Dendritic cell treated with granulocyte-macrophage colony-stimulating factor and Interleukin-4, amounts not matched to agents 40 ng/mL and 50 ng/mL, for 4 days (primary cell): ENCODE measurements at regions of chr12 and their contacts with region 1.

Region 1: DNA sequence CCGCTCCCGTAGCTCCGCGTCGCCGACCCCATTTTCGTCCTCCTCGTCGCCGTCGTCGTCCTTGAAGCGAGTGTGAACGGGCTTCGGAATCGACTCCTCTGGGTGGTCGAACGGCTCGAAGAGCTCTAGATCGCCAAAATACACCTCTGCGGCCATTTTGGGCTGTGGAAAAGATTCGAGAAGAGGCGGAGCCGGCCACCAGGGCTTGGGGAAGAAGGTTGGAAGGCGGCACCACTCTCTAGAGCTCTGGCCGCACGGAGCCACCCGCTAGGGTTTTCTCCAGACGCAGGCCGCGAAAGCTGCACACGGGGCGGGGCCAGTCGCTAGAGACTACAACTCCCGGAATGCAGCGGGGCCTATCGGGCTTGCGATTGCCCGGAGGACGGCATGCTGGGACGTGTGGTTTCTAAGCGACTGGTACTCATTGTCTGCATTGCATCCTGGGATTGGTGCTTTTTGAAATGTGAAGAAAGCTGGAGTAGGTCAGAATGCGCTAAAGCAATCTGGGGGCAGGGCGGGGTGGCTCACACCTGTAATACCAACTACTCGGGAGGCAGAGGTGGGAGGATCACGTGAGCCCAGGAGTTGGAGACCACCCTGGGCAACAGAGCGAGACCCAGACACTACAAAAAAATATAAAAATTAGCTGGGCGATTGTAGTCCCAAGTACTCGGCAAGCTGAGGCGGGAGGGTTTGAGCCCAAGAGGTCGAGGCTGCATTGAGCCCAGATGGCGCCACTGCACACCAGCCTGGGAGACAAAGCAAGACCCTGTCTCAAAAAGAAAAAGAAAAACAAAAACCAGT is at the start of gene ZCCHC8:
- H3K4me3 Mint-ChIP-seq: peak within 1 kb of the TSS; percentile 98
- H3K27ac Mint-ChIP-seq: peak within 1 kb of the TSS; percentile 98
- H3K4me1 Mint-ChIP-seq: peaks cover 39% of the 10 kb centered on the region
- H3K27me3 Mint-ChIP-seq: no peaks in the 10 kb centered on the region

Region 2: GRCh38 chr12:122203301-122204166 is 297.4 kb before region 1 on chr12 and contains the start of gene B3GNT4:
- intact Hi-C with region 1: no loop called
- H3K4me3 Mint-ChIP-seq: peak within 1 kb of the TSS; percentile 73
- H3K27ac Mint-ChIP-seq: no peak within 1 kb of the TSS
- H3K4me1 Mint-ChIP-seq: peaks cover 31% of the 10 kb centered on the region
- H3K27me3 Mint-ChIP-seq: peaks cover 70% of the 10 kb centered on the region

Region 3: GRCh38 chr12:122421821-122422729 is 78.8 kb before region 1 on chr12 and contains the start of gene CLIP1:
- intact Hi-C with region 1: loop called (anchors 2 kb)
- H3K4me3 Mint-ChIP-seq: peak within 1 kb of the TSS; percentile 88
- H3K27ac Mint-ChIP-seq: peak within 1 kb of the TSS; percentile 94
- H3K4me1 Mint-ChIP-seq: peaks cover 30% of the 10 kb centered on the region
- H3K27me3 Mint-ChIP-seq: no peaks in the 10 kb centered on the region

Region 4: DNA sequence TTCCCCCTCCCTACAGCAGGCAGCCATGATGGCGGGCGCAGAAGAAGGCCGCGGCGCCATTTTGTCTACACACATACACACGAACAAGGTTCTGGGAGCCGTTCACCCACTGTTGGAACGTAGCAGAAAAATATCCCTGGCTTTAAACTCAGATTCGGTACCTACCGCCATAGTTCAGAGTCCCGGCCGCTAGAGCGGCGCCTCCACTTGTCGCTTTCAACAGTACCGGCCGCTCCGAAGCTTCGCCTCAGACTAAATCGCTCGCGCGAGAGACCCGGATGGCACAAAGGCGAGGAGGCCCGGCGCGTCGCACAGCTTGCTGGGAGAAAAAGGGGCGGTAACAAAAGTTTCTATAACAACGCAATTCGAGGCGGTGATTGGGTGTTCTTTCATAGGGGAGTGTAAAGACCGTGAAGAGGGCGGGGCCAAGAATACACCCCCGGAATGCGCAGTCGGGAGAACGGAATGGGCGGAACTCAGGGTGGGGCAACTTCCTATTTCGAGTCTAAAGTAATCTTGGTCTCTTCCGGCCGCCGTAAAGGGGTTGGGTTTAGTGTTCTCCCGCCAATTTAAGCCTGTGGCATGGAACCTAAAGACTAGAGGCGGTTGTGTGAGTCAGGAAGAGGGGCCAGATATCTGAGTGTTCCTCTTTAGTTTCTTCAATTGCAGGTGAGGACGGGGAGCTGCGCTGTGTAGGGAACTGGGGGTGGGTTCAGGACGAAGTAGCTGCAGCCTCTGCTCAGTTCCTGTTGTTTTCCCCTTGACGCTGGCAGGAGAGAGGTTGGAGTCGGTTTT is 26.0 kb after region 1 on chr12 and contains the starts of genes KNTC1 and RSRC2:
- intact Hi-C with region 1: loop called (anchors 1 kb)
- H3K4me3 Mint-ChIP-seq: no peak within 1 kb of the TSS
- H3K27ac Mint-ChIP-seq: no peak within 1 kb of the TSS
- H3K4me1 Mint-ChIP-seq: peaks cover 9% of the 10 kb centered on the region
- H3K27me3 Mint-ChIP-seq: no peaks in the 10 kb centered on the region

Region 5: GRCh38 chr12:122545855-122546254 is 45.0 kb after region 1 on chr12:
- intact Hi-C with region 1: no loop called
- H3K4me3 Mint-ChIP-seq: no peak overlapping the region
- H3K27ac Mint-ChIP-seq: no peak overlapping the region
- H3K4me1 Mint-ChIP-seq: no peaks in the 10 kb centered on the region
- H3K27me3 Mint-ChIP-seq: no peaks in the 10 kb centered on the region

Region 6: DNA sequence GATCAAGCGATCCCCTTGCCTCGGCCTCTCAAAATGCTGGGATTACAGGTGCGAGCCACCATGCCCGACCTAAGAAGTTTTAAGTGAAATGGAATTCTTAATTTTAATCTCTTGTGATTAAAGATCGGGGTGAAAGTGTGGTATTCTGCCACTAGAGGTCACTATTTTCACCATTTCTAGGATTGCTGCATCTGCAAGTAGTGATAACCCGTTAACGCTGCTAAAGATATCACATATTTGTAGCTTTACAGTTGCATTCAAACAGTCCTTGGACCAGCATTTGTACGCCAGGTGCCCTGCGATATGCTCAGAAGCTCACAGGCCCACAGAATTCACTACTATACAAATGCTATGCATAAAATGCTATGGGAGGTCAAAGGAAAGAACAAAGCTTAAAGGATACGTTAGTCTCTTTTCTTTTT is 292.8 kb after region 1 on chr12:
- intact Hi-C with region 1: no loop called
- H3K4me3 Mint-ChIP-seq: no peak overlapping the region
- H3K27ac Mint-ChIP-seq: no peak overlapping the region
- H3K4me1 Mint-ChIP-seq: peaks cover 5% of the 10 kb centered on the region
- H3K27me3 Mint-ChIP-seq: no peaks in the 10 kb centered on the region